Posterior vena cava (tissue), 2 donors: ENCODE measurements at regions of chr6 and their contacts with region 1.

Region 1: GRCh38 chr6:53869952-53870351 is 75.1 kb downstream of the LRRC1 start:
- DNase-seq: no peak

Region 2: GRCh38 chr6:53894091-53894490 is 24.1 kb after region 1 on chr6:
- intact Hi-C with region 1: loop called in 1 of 2 experiments (anchors 2 kb)
- DNase-seq: no peak